Naive thymus-derived CD4-positive, alpha-beta T cell (primary cell): ENCODE measurements at regions of chr3 and their contacts with region 1.

Region 1: DNA sequence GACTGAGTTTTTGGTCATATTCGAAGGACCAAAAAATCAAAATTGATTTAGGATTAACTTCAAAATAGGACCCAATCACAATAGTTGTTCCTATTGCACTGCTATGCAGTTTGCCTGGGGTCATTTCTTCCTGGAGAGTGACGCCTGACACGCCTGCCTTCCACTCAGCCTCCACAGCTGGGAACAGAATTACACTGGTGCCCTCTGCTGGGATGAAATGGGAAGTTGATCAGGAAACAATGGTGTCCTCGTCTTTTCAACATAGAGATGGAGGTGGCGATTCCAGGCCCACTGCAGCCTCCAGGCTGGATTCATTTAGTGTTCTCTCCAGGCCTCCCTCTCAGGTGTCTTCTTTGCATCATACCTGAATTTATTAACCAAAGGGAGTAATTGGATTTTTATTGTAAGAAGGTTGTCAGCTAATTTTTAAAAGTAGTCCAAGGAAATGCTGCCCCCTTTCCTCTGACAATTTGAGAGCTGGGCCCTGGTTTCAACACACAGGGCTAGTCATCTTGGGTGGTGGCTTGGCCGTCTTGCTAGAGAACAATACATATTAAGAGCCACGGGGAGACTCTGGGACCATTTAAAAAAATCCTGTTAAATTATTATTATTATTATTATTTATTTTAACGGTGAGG is 69.7 kb downstream of the GAP43 start:
- DNase-seq: peak; percentile 19 to 65 (median 49)
- ATAC-seq: peak; percentile 89
- H3K4me3 ChIP-seq: no peak overlapping the region
- H3K4me3 Mint-ChIP-seq: no peak overlapping the region
- H3K27ac ChIP-seq: no peak overlapping the region
- H3K27ac Mint-ChIP-seq: peak overlapping the region in 1 of 9 donors; percentile 47
- H3K4me1 ChIP-seq: no peaks in the 10 kb centered on the region
- H3K4me1 Mint-ChIP-seq: no peaks in the 10 kb centered on the region
- H3K27me3 ChIP-seq: no peaks in the 10 kb centered on the region
- H3K27me3 Mint-ChIP-seq: peaks cover 3 to 11% (median 4%) of the 10 kb centered on the region in 5 donors

Region 2: GRCh38 chr3:114152519-114153151 is 1540.4 kb before region 1 on chr3:
- CTCF ChIA-PET with region 1: no interaction called
- POLR2A ChIA-PET with region 1: no interaction called
- intact Hi-C with region 1: loop called in 1 of 2 experiments (anchors 5 kb)
- DNase-seq: peak; percentile 61 to 83 (median 78)
- ATAC-seq: peak; percentile 97
- H3K4me3 ChIP-seq: peak overlapping the region; percentile 55
- H3K4me3 Mint-ChIP-seq: peak overlapping the region; percentile 37 to 73 (median 62)
- H3K27ac ChIP-seq: no peak overlapping the region
- H3K27ac Mint-ChIP-seq: peak overlapping the region in 2 of 9 donors; percentile 14 to 40
- H3K4me1 ChIP-seq: peaks cover 8 to 9% of the 10 kb centered on the region in 2 donors
- H3K4me1 Mint-ChIP-seq: peaks cover 0 to 12% (median 0%) of the 10 kb centered on the region in 7 donors
- H3K27me3 ChIP-seq: no peaks in the 10 kb centered on the region
- H3K27me3 Mint-ChIP-seq: no peaks in the 10 kb centered on the region

Region 3: GRCh38 chr3:115040673-115041286 is 652.2 kb before region 1 on chr3:
- CTCF ChIA-PET with region 1: no interaction called
- POLR2A ChIA-PET with region 1: no interaction called
- intact Hi-C with region 1: loop called (anchors 1 kb)
- DNase-seq: peak in 7 of 9 donors; percentile 15 to 48 (median 30)
- ATAC-seq: peak; percentile 66
- H3K4me3 ChIP-seq: no peak overlapping the region
- H3K4me3 Mint-ChIP-seq: no peak overlapping the region
- H3K27ac ChIP-seq: no peak overlapping the region
- H3K27ac Mint-ChIP-seq: peak overlapping the region in 2 of 9 donors; percentile 3 to 51
- H3K4me1 ChIP-seq: no peaks in the 10 kb centered on the region
- H3K4me1 Mint-ChIP-seq: peaks cover 0 to 35% (median 16%) of the 10 kb centered on the region in 7 donors
- H3K27me3 ChIP-seq: no peaks in the 10 kb centered on the region
- H3K27me3 Mint-ChIP-seq: no peaks in the 10 kb centered on the region

Region 4: DNA sequence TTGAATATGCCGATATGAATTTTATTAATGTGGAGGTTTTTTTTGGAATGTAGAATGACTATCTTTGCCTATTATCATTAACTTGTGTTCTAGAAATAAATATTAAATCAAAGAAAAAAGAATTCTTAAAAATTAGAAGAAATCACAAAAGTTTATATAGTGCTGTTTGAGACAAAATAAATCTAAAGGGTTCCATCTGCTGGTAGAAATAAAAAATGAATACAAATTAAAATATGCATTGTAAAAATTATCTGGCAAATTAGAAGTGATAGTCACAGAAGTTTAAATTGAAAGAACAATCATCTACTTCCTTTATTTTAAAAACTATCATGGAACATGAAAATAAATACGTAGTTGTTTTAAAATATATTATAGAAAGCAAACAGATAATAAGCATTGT is 523.2 kb before region 1 on chr3:
- CTCF ChIA-PET with region 1: no interaction called
- POLR2A ChIA-PET with region 1: no interaction called
- intact Hi-C with region 1: loop called in 1 of 2 experiments (anchors 2 kb)
- DNase-seq: peak in 5 of 9 donors; percentile 14 to 36 (median 23)
- ATAC-seq: no peak
- H3K4me3 ChIP-seq: no peak overlapping the region
- H3K4me3 Mint-ChIP-seq: no peak overlapping the region
- H3K27ac ChIP-seq: no peak overlapping the region
- H3K27ac Mint-ChIP-seq: no peak overlapping the region
- H3K4me1 ChIP-seq: peaks cover 11 to 13% of the 10 kb centered on the region in 2 donors
- H3K4me1 Mint-ChIP-seq: peaks cover 7 to 13% (median 12%) of the 10 kb centered on the region in 7 donors
- H3K27me3 ChIP-seq: no peaks in the 10 kb centered on the region
- H3K27me3 Mint-ChIP-seq: peaks cover 0 to 10% (median 0%) of the 10 kb centered on the region in 5 donors

Region 5: DNA sequence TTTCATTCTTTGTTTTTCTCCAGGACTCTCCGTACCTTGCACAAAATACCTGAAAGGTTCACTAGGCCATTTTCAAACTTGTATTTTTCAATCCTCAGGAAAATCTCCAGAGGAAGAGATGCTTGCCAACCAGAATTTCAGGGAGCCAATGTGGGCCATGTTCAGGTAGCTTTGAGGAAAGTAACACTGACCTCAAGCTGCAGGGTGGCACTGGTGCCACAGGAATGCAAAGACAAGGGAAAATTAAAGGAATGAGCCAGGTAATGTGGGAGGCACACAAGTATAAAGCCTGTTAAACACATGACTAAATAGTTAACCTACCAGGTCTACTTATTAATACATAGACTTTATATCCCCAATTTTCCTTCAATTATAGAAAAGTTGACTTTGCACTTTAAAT is 121.6 kb before region 1 on chr3:
- CTCF ChIA-PET with region 1: no interaction called
- POLR2A ChIA-PET with region 1: no interaction called
- intact Hi-C with region 1: loop called in 1 of 2 experiments (anchors 10 kb)
- DNase-seq: no peak
- ATAC-seq: no peak
- H3K4me3 ChIP-seq: no peak overlapping the region
- H3K4me3 Mint-ChIP-seq: no peak overlapping the region
- H3K27ac ChIP-seq: no peak overlapping the region
- H3K27ac Mint-ChIP-seq: no peak overlapping the region
- H3K4me1 ChIP-seq: no peaks in the 10 kb centered on the region
- H3K4me1 Mint-ChIP-seq: no peaks in the 10 kb centered on the region
- H3K27me3 ChIP-seq: no peaks in the 10 kb centered on the region
- H3K27me3 Mint-ChIP-seq: peaks cover 3 to 20% (median 15%) of the 10 kb centered on the region in 5 donors

Region 6: DNA sequence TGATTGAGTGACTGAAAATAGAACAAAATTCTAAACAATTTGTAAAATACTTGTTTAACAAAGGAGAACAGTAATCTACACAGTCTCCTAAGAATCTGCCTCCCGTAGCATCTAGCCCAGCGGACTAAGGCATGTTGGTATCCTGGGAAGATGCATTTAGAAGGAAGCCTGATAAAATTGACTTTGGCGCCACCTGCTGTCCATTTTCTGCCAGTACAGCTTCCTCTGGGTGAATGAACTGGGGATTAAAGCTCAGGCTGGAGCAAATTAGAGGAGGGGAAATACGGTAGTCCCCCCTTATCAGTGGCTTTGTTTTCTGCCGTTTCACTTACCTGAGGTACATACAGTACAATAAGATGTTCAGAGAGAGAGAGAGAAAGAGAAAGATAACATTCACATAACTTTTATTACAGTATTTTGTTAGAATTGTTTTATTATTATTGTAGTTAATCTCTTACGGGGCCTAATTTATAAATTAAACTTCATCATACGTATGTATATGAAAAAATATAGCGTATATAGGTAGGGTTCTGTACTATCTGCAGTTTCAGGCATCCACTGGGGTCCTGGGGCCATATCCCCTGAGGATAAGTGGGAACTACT is 121.9 kb after region 1 on chr3:
- CTCF ChIA-PET with region 1: interaction called, 4 read pairs
- POLR2A ChIA-PET with region 1: no interaction called
- intact Hi-C with region 1: loop called (anchors 1 to 2 kb)
- DNase-seq: peak; percentile 21 to 65 (median 46)
- ATAC-seq: peak; percentile 61
- H3K4me3 ChIP-seq: no peak overlapping the region
- H3K4me3 Mint-ChIP-seq: no peak overlapping the region
- H3K27ac ChIP-seq: no peak overlapping the region
- H3K27ac Mint-ChIP-seq: peak overlapping the region in 1 of 9 donors; percentile 69
- H3K4me1 ChIP-seq: no peaks in the 10 kb centered on the region
- H3K4me1 Mint-ChIP-seq: peaks cover 0 to 5% (median 0%) of the 10 kb centered on the region in 7 donors
- H3K27me3 ChIP-seq: no peaks in the 10 kb centered on the region
- H3K27me3 Mint-ChIP-seq: peaks cover 0 to 31% (median 12%) of the 10 kb centered on the region in 5 donors